Activated CD4-positive, alpha-beta T cell treated with anti-CD3 and anti-CD28 coated beads for 36 hours (primary cell): ENCODE measurements at regions of chr10 and their contacts with region 1.

Region 1: GRCh38 chr10:124236816-124237215 is 143.4 kb upstream of the CHST15 start:
- DNase-seq: no peak
- ATAC-seq: no peak
- H3K4me3 Mint-ChIP-seq: no peak overlapping the region
- H3K27ac Mint-ChIP-seq: no peak overlapping the region
- H3K4me1 Mint-ChIP-seq: no peaks in the 10 kb centered on the region
- H3K27me3 Mint-ChIP-seq: no peaks in the 10 kb centered on the region

Region 2: DNA sequence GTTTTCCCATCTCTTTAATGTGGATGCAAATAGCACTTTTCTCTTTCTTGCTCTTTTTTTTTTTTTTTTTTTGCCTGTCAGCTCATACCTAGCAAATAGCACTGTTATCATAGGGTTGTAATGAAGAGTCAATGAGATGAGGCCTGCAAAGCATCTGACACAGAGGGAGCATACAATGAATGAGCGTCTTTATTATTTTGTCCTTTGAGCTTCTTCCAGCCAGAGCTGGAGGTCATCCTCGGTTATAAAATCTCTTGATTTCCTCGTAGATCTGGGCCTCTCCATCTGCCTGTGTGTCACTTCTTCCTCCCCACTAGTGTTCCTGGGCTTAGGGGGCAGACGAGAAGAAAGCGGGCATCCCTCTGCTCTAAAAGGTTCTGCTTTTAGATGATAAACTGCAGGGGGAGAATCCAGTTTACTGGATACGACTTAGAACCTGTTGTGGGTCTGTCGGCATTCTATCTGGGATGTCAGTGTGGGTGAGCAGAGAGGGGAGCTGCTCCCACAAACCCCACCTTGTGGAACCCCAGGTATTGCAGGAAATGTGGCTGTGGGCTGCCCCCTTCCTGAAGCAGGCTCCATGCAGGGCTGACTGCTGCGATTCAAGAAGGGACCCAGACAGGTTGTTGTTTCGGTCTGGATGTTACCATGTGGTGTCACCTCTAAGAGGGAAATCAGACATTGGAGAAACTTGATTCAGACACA is 706.5 kb before region 1 on chr10:
- CTCF ChIA-PET with region 1: no interaction called
- POLR2A ChIA-PET with region 1: no interaction called
- intact Hi-C with region 1: no loop called
- DNase-seq: no peak
- ATAC-seq: no peak
- H3K4me3 Mint-ChIP-seq: no peak overlapping the region
- H3K27ac Mint-ChIP-seq: no peak overlapping the region
- H3K4me1 Mint-ChIP-seq: no peaks in the 10 kb centered on the region
- H3K27me3 Mint-ChIP-seq: peaks cover 27% of the 10 kb centered on the region

Region 3: DNA sequence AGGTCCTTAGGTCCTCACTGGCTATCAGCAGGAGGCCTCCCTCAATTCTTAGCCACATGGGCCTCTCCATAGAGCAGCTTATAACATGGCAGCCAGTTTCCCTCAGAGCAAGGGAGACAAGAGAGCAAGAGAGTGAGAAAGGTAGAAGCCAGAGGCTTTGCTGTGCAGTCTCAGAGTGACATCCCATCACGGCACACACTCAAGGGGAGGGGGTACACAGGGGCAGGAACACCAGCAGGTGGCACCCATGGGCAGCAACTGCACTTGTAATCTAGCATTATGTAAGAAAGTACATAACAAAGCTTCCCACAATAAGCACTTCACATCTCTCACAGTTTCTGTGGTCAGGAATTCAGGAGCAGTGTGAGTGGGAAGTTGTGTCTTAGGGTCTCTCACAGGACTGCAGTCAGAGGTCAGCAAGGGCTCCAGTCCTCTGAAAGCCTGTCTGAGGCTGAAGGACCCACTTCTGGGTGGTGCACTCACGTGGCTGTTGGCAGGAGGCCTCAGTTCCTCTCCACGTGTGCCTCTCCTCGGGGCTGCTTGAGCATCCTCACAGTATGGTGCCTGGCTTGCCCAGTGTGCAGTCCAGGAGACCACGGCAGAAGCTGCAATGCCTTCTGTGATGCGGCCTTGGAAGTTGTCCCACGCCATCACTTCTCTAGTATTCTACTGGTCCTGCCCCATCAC is 22.5 kb after region 1 on chr10:
- CTCF ChIA-PET with region 1: no interaction called
- POLR2A ChIA-PET with region 1: no interaction called
- intact Hi-C with region 1: loop called in 1 of 2 experiments (anchors 2 kb)
- DNase-seq: peak; percentile 46
- ATAC-seq: no peak
- H3K4me3 Mint-ChIP-seq: no peak overlapping the region
- H3K27ac Mint-ChIP-seq: no peak overlapping the region
- H3K4me1 Mint-ChIP-seq: no peaks in the 10 kb centered on the region
- H3K27me3 Mint-ChIP-seq: no peaks in the 10 kb centered on the region